Ovary (tissue), 10 donors: ENCODE measurements at regions of chr2 and their contacts with region 1.

Region 1: DNA sequence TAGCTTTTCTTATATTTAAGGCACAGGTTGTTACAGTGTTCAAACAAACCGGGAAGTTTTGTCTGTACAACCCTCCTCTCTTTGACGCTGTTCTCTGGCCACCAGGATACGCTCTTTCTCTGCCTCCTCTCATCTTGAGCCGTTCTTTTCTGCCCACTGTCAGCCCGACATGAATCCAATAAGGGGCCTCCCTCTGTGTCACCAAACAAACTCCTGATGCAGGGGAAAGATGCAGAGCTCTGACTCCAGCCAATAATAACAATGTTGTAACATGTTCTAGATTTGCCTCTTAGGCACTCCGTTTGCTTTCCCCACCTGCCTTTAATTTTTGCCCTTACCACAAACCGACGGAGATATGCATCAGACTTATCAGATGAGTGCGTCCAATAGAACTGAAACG is 449.3 kb downstream of the SLC4A3 start:
- DNase-seq: peak in 3 of 5 donors; percentile 39 to 53 (median 45)
- H3K4me3 ChIP-seq: no peak overlapping the region
- H3K27ac ChIP-seq: peak overlapping the region in 1 of 2 donors; percentile 63
- H3K4me1 ChIP-seq: peaks cover 41% of the 10 kb centered on the region
- H3K27me3 ChIP-seq: no peaks in the 10 kb centered on the region
- CTCF ChIP-seq: peak in 1 of 3 donors; percentile 14
- EP300 ChIP-seq: no peak
- POLR2A ChIP-seq: no peak

Region 2: DNA sequence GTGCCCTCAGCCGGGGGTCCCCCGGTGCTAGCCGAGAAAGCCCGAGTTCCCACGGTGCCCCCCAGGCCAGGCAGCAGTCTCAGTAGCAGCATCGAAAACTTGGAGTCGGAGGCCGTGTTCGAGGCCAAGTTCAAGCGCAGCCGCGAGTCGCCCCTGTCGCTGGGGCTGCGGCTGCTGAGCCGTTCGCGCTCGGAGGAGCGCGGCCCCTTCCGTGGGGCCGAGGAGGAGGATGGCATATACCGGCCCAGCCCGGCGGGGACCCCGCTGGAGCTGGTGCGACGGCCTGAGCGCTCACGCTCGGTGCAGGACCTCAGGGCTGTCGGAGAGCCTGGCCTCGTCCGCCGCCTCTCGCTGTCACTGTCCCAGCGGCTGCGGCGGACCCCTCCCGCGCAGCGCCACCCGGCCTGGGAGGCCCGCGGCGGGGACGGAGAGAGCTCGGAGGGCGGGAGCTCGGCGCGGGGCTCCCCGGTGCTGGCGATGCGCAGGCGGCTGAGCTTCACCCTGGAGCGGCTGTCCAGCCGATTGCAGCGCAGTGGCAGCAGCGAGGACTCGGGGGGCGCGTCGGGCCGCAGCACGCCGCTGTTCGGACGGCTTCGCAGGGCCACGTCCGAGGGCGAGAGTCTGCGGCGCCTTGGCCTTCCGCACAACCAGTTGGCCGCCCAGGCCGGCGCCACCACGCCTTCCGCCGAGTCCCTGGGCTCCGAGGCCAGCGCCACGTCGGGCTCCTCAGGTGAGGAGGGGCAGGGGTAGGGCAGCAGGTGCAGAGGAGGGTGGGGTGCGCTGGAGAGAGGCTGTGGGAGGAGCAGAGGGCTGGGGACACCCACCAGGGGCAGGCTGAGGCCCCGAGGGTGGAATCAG is 592.2 kb before region 1 on chr2:
- intact Hi-C with region 1: no loop called
- DNase-seq: no peak
- H3K4me3 ChIP-seq: peak overlapping the region; percentile 12
- H3K27ac ChIP-seq: no peak overlapping the region
- H3K4me1 ChIP-seq: peaks cover 1% of the 10 kb centered on the region
- H3K27me3 ChIP-seq: no peaks in the 10 kb centered on the region
- CTCF ChIP-seq: no peak
- EP300 ChIP-seq: no peak
- POLR2A ChIP-seq: no peak

Region 3: DNA sequence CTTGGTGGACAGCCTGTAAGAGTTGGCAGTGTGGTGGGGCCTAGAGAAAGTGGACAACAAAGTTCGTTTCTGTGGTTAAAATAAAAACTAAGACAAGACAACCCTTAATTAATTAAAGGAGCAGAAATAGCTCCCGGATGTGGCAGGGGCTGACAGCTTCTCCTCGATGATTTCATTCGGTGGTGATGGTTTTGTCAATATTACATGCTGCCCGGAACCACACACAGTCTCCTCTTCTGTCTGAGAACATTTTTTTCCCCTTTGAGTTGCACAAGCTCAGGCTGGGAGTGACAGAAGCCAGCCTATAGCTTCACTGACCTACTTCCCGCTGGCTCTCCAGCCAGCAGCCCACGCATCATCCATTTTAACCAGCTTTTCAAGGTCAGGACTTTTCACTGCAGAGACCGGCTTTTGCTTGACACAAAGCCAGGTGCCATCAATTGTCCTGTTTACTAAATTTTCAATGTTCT is 70.6 kb before region 1 on chr2:
- intact Hi-C with region 1: loop called in 1 of 4 experiments (anchors 10 kb)
- DNase-seq: peak; percentile 44 to 55 (median 47)
- H3K4me3 ChIP-seq: no peak overlapping the region
- H3K27ac ChIP-seq: peak overlapping the region in 1 of 2 donors; percentile 16
- H3K4me1 ChIP-seq: peaks cover 20% of the 10 kb centered on the region
- H3K27me3 ChIP-seq: no peaks in the 10 kb centered on the region
- CTCF ChIP-seq: no peak
- EP300 ChIP-seq: no peak
- POLR2A ChIP-seq: no peak

Region 4: GRCh38 chr2:220143336-220143735 is 66.6 kb after region 1 on chr2:
- intact Hi-C with region 1: no loop called
- DNase-seq: no peak
- H3K4me3 ChIP-seq: no peak overlapping the region
- H3K27ac ChIP-seq: no peak overlapping the region
- H3K4me1 ChIP-seq: no peaks in the 10 kb centered on the region
- H3K27me3 ChIP-seq: no peaks in the 10 kb centered on the region
- CTCF ChIP-seq: no peak
- EP300 ChIP-seq: no peak
- POLR2A ChIP-seq: no peak